Right cardiac atrium (tissue), 5 donors: ENCODE measurements at regions of chr2 and their contacts with region 1.

Region 1: GRCh38 chr2:69914170-69914960 is 544 bp upstream of the MXD1 start:
- DNase-seq: peak; percentile 100
- ATAC-seq: peak; percentile 97
- H3K4me3 ChIP-seq: peak overlapping the region; percentile 47
- H3K27ac ChIP-seq: peak overlapping the region; percentile 97
- H3K4me1 ChIP-seq: no peaks in the 10 kb centered on the region
- H3K27me3 ChIP-seq: no peaks in the 10 kb centered on the region

Region 2: GRCh38 chr2:70070541-70071268 is 156.3 kb after region 1 on chr2:
- intact Hi-C with region 1: loop called in 2 of 4 experiments (anchors 2 to 5 kb)
- DNase-seq: peak; percentile 40 to 69 (median 67)
- ATAC-seq: peak; percentile 95 to 96
- H3K4me3 ChIP-seq: no peak overlapping the region
- H3K27ac ChIP-seq: peak overlapping the region; percentile 68
- H3K4me1 ChIP-seq: peaks cover 4% of the 10 kb centered on the region
- H3K27me3 ChIP-seq: no peaks in the 10 kb centered on the region

Region 3: GRCh38 chr2:70086838-70087701 is 172.7 kb after region 1 on chr2 and contains the start of gene PCBP1:
- intact Hi-C with region 1: loop called in 3 of 4 experiments (anchors 5 to 10 kb)
- DNase-seq: peak; percentile 96 to 99 (median 99)
- ATAC-seq: peak; percentile 88 to 89
- H3K4me3 ChIP-seq: peak within 1 kb of the TSS; percentile 67
- H3K27ac ChIP-seq: peak within 1 kb of the TSS; percentile 99
- H3K4me1 ChIP-seq: peaks cover 6% of the 10 kb centered on the region
- H3K27me3 ChIP-seq: no peaks in the 10 kb centered on the region
- total RNA-seq, gene PCBP1: 233 to 259 (median 239) TPM

Region 4: GRCh38 chr2:70142590-70143313 is 228.4 kb after region 1 on chr2:
- intact Hi-C with region 1: loop called in 3 of 4 experiments (anchors 5 kb)
- DNase-seq: peak; percentile 100
- ATAC-seq: peak; percentile 90 to 93
- H3K4me3 ChIP-seq: peak overlapping the region; percentile 33
- H3K27ac ChIP-seq: peak overlapping the region; percentile 36
- H3K4me1 ChIP-seq: peaks cover 3% of the 10 kb centered on the region
- H3K27me3 ChIP-seq: no peaks in the 10 kb centered on the region

Region 5: DNA sequence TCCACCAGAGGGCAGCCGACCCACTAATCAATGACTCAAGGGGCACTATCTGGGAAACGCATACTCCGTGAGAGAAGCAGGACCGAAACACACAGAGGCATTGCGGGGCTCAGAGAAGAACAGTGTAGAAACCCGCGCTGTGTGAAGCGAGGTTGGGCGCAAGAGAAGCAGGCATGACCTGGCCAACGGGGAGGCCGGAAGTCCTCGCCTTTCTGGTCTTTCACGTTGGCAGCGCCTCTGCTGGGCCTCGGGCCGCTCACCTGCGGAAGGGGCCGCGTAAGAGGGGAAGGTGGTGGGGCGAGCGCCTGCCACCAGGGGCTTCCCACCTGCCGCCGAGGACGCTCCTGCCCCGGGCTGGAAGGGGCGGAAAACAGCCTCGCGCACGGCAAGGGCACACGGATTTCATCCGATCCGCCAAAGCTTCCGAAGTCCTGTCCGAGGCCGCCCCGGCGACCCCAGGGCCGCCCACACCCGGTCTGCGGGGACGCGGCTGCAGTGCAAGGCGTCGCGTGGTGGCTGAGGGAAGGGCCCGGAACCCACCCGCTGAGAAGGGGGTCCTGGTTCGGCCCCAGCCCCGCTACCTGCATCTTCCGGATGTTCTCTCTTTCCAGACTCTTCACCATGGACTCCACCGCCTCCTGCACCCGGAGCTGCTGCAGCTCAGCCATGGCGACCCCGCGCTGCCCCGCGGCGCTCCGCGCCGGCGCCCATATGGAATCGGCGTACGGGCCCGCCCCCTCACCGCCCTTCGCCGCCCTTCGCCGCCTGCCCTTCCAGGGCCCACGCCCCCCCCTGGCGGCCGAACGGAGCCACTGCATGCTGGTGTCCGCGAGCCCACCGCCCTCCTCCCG is 387.2 kb after region 1 on chr2 and contains the start of gene FAM136A:
- intact Hi-C with region 1: loop called in 2 of 4 experiments (anchors 5 to 10 kb)
- DNase-seq: peak; percentile 88 to 95 (median 95)
- ATAC-seq: peak; percentile 95 to 96
- H3K4me3 ChIP-seq: peak within 1 kb of the TSS; percentile 86
- H3K27ac ChIP-seq: peak within 1 kb of the TSS; percentile 28
- H3K4me1 ChIP-seq: no peaks in the 10 kb centered on the region
- H3K27me3 ChIP-seq: no peaks in the 10 kb centered on the region
- total RNA-seq, gene FAM136A: 18.8 to 26.0 (median 22.1) TPM